ENCODE measurements at regions of chr3 and their contacts with region 1.

Region 1: DNA sequence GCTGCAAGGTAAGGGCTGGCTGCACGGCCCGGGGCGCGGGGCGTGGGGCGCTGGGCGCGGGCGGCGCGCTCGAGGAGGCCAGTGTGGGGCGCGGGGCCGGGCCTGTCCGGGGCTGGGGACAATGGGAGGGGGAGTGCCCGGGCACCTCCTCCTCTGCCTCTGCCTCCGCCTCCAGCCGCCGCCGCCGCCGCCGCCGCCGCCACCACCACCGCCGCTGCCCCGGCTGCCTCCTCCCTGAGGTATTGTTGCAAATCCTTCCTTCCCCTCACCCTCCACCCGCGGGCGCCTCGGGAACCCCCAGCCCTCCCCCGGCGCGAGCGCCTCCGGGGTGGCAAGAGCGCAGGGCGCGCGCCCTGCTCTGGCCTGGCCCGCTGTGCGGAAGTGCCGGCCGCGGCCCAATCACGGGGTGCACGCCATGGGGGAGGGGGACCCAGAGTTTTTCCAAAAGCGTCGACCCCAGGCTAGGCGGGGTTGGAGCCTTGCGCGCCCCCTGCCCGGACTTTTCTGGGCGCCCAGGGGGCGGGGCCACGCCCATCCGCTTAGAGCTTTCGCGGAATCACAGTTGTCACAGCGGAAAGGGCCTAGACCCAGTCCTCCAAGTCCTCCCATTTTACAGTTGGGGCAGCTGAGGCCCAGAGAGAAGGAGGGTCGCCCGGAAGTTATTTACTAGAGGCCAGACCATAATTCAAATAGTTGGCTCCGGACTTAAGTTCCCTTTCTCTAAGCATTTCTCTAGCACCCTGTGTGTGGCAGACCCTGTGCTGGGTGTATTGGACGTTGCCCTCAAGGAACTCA is at the start of gene LPP:
- DNase-seq: peak; percentile 80
- ATAC-seq: peak; percentile 88 to 93
- total RNA-seq, gene LPP: 152 to 181 TPM

Region 2: GRCh38 chr3:188126276-188126675 is 27.9 kb before region 1 on chr3:
- intact Hi-C with region 1: loop called in 1 of 2 experiments (anchors 2 kb)
- DNase-seq: no peak
- ATAC-seq: peak in 1 of 2 donors; percentile 69

Region 3: GRCh38 chr3:188262913-188263683 is 108.9 kb after region 1 on chr3:
- intact Hi-C with region 1: loop called in 1 of 2 experiments (anchors 10 kb)
- DNase-seq: no peak
- ATAC-seq: peak; percentile 50 to 80

Region 4: DNA sequence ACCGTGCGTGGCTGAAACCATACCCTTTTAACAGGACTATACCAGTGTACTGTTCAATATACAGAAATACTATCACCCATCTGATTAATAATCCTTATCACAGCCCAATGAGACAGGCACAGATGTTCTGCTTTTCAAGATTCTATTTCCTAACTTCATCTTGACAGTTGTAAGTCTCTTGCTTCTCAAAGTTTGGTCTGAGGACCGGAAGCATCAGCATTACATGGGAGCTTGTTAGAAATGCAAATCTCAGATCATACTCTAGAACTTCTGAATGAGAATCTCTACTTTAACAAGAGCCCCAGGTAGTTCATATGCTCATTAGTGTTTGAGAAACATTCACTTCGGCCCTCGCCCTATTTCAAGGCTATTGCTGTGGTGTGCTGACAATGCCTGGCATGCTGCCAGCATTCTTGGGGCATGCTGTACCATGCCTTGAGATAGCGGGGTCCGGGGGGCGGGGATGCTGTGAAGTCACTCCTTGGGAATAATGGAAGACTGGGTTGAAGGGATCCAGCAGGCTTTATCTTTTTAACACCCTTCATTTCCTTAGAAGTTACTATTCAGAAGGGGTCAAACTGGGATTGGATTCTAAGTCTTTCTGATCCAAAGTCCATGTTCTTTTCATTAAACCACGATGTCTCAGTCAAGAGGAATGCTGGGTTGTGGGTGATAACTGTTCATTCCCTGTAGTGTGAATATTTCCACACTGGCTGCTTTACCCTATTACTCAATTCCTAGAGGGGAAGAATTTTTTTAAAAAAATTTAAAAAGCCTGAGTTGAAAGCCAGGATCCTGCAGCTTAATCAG is 194.4 kb after region 1 on chr3:
- intact Hi-C with region 1: loop called in 1 of 2 experiments (anchors 10 kb)
- DNase-seq: peak; percentile 93
- ATAC-seq: peak; percentile 85 to 92

Region 5: GRCh38 chr3:188507244-188507720 is 353.1 kb after region 1 on chr3:
- intact Hi-C with region 1: no loop called
- DNase-seq: no peak
- ATAC-seq: peak; percentile 65 to 78